K562 (cell line): ENCODE measurements at regions of chr17 and their contacts with region 1.

Region 1: DNA sequence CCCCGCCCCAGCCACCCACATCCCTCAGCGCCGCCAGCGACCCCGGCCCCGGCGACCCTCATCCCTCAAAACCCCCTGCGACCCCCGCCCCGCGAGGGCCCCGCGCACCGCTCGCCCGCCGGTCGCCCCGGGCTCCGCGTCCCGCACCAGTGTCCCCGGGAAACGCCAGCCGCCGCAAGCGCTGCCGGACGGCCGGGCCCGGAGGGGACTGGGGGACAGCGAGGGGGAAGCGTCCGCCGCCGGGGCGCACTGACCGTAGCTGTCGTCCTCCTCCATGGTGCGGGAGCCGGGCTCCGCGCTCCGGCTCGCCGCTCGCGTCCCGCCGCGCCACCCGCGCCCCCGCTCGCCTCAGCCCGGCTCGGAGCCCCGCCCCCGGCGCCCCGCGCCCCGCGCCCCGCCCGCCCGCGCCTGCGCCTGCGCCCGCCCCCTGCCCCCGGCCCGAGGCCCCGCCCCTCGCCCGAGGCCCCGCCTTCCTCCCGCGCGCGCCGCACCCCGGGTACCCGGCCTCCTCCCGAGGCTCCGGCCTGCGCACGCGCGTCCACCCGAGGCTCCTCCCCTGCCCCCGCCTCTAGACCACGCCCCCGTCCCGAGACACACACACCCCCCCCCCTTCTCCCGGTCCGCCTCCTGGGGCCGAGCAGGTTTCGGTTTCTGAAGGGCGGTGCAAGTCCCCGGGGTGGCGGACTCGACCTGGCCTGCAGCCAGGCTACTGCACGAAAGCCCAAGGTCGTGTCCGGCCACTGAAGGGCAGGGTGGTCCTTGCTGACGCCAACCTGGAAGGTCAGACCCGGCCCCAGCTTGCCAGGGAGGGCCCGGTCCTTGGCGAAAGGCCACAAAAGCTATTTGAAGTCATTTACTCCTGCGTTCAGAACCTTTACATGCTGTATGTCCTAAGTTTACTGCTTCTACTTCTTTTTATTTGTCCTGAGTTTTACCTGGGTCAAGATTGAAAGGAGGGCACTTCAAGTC is at the start of gene CYTH1:
- DNase-seq: peak; percentile 93 to 99 (median 98)
- ATAC-seq: peak; percentile 81
- H3K4me3 ChIP-seq: peak within 1 kb of the TSS; percentile 80
- H3K27ac ChIP-seq: peak within 1 kb of the TSS; percentile 94
- H3K4me1 ChIP-seq: peaks cover 41 to 63% of the 10 kb centered on the region in 2 experiments
- H3K27me3 ChIP-seq: no peaks in the 10 kb centered on the region
- CTCF ChIP-seq: no peak
- EP300 ChIP-seq: no peak
- POLR2A ChIP-seq: peak; percentile 67
- RAD21 ChIP-seq: no peak
- polyA plus RNA-seq, gene CYTH1: 0.52 to 0.70 TPM

Region 2: DNA sequence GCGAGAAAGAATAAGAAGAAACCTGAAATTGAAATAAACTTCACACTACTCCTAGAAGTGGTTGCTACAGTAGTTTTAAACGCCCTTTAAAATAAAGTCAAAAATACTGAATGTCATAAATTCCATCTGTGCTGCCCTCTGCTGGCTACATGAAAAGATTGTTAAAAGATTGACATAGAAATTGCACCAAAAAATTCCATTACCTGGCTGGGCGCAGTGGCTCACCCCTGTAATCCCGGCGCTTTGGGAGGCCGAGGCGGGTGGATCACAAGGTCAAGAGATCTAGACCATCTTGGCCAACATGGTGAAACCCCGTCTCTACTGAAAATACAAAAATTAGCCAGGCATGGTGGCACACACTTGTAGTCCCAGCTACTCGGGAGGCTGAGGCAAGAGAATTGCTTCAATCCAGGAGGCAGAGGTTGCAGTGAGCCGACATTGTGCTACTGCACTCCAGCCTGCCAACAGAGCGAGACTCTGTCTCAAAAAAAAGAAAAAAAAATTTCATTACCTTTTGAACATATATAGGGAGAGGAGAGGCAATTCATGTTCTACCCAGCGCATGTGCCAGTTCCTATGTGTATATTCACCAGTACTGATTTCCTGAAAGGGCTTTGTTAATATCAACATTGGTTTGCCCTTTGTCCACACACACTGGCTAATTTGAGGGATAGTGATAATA is 36.7 kb before region 1 on chr17:
- CTCF ChIA-PET with region 1: no interaction called
- POLR2A ChIA-PET with region 1: interaction called, 3 read pairs
- in situ Hi-C with region 1: no loop called
- intact Hi-C with region 1: loop called (anchors 5 kb)
- DNase-seq: peak in 1 of 4 experiments; percentile 67
- ATAC-seq: peak; percentile 27; the same call in 1 of the 3 replicates
- H3K4me3 ChIP-seq: no peak overlapping the region
- H3K27ac ChIP-seq: no peak overlapping the region
- H3K4me1 ChIP-seq: peaks cover 13 to 29% of the 10 kb centered on the region in 2 experiments
- H3K27me3 ChIP-seq: no peaks in the 10 kb centered on the region
- CTCF ChIP-seq: peak; percentile 50 to 69 (median 57); a peak in 5 of 6 replicates
- EP300 ChIP-seq: no peak
- POLR2A ChIP-seq: no peak
- RAD21 ChIP-seq: peak; percentile 29 to 66; a peak in 3 of 4 replicates

Region 3: GRCh38 chr17:78798695-78799559 is 16.7 kb after region 1 on chr17:
- CTCF ChIA-PET with region 1: no interaction called
- POLR2A ChIA-PET with region 1: interaction called, 12 read pairs
- in situ Hi-C with region 1: no loop called
- intact Hi-C with region 1: no loop called
- DNase-seq: peak in 2 of 4 experiments; percentile 28 to 49
- ATAC-seq: peak; percentile 77
- H3K4me3 ChIP-seq: no peak overlapping the region
- H3K27ac ChIP-seq: no peak overlapping the region
- H3K4me1 ChIP-seq: no peaks in the 10 kb centered on the region; a peak in 2 of 5 replicates
- H3K27me3 ChIP-seq: no peaks in the 10 kb centered on the region
- CTCF ChIP-seq: peak; percentile 32 to 54 (median 52); a peak in 5 of 6 replicates
- EP300 ChIP-seq: no peak
- POLR2A ChIP-seq: no peak
- RAD21 ChIP-seq: peak in 1 of 2 experiments; percentile 49; a peak in 3 of 4 replicates

Region 4: DNA sequence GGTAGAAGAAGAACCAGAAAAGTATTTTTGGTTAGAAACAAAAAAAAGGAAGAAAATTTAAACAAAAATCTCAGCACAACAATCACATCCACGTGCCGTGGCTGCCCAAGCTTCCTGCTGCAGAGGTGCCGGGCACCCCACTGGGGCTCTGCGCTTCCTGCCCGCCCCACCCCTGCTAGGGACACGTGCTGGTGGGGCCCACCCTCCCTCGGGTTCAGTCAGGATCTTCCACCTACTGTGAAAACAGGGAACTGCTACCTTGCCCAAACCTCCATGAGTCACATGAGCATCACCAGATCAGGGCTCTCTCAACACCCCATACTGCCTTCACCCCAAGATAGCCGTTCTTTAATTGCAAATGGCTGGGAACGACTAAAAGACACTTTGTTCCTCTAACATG is 24.2 kb after region 1 on chr17:
- CTCF ChIA-PET with region 1: no interaction called
- POLR2A ChIA-PET with region 1: interaction called, 16 read pairs
- in situ Hi-C with region 1: no loop called
- intact Hi-C with region 1: no loop called
- DNase-seq: peak in 2 of 4 experiments; percentile 23 to 33
- ATAC-seq: no peak
- H3K4me3 ChIP-seq: no peak overlapping the region
- H3K27ac ChIP-seq: no peak overlapping the region
- H3K4me1 ChIP-seq: no peaks in the 10 kb centered on the region; a peak in 1 of 5 replicates
- H3K27me3 ChIP-seq: no peaks in the 10 kb centered on the region
- CTCF ChIP-seq: 0 out of 6 replicates have a peak, but pooled peaks of 1 of the 3 experiments have one; percentile 9
- EP300 ChIP-seq: no peak
- POLR2A ChIP-seq: no peak
- RAD21 ChIP-seq: no peak